B cell (primary cell): ENCODE measurements at regions of chr11 and their contacts with region 1.

Region 1: GRCh38 chr11:14519917-14520746 is at the start of gene PSMA1:
- DNase-seq: peak; percentile 94
- ATAC-seq: peak; percentile 93
- H3K4me3 ChIP-seq: peak within 1 kb of the TSS; percentile 69 to 93 (median 89)
- H3K4me3 Mint-ChIP-seq: peak within 1 kb of the TSS; percentile 98
- H3K27ac ChIP-seq: peak within 1 kb of the TSS; percentile 83 to 91
- H3K27ac Mint-ChIP-seq: peak within 1 kb of the TSS; percentile 97
- H3K4me1 ChIP-seq: peaks cover 13 to 18% of the 10 kb centered on the region in 2 donors
- H3K4me1 Mint-ChIP-seq: peaks cover 21% of the 10 kb centered on the region
- H3K27me3 ChIP-seq: no peaks in the 10 kb centered on the region
- H3K27me3 Mint-ChIP-seq: no peaks in the 10 kb centered on the region
- CTCF ChIP-seq: no peak
- total RNA-seq, gene PSMA1: 115 and 123 TPM in 2 replicates

Region 2: GRCh38 chr11:14443638-14444037 is 76.5 kb before region 1 on chr11:
- CTCF ChIA-PET with region 1: no interaction called
- POLR2A ChIA-PET with region 1: no interaction called
- intact Hi-C with region 1: no loop called
- DNase-seq: no peak
- ATAC-seq: no peak
- H3K4me3 ChIP-seq: no peak overlapping the region
- H3K4me3 Mint-ChIP-seq: no peak overlapping the region
- H3K27ac ChIP-seq: no peak overlapping the region
- H3K27ac Mint-ChIP-seq: no peak overlapping the region
- H3K4me1 ChIP-seq: peaks cover 20 to 22% of the 10 kb centered on the region in 2 donors
- H3K4me1 Mint-ChIP-seq: peaks cover 36% of the 10 kb centered on the region
- H3K27me3 ChIP-seq: no peaks in the 10 kb centered on the region
- H3K27me3 Mint-ChIP-seq: no peaks in the 10 kb centered on the region
- CTCF ChIP-seq: no peak

Region 3: DNA sequence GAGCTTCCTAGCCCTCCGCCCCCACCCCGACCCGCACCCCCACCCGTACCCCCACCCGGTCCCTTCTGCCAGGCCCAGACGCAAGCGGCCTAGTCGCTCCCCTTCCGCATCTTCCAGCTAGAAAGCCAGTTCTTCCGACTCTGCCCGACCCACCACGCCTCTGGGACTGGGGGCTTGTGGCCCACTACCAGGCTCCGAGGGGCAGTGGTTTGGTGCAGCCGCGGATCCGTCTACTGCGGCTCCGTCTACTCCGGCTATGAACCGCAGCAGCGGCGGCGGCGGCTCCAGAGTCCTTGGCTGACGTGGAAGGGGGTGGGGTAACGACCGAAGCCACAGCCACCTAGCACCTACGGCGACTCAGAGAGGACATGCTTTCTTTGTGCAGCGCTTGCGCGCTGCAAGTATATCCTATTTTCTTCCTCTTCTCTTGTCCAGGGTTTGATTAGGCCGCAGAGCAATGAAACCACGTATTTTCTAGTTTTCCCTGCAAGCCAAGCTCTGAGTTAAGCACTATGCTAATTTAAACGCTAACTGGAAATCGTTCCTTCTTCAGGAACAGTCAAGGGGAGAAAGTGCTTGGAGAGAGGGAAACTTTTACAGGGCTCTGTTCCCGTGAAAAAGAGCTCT is 20.5 kb before region 1 on chr11 and contains the start of gene COPB1:
- CTCF ChIA-PET with region 1: interaction called, 8 read pairs
- POLR2A ChIA-PET with region 1: interaction called, 5 read pairs
- intact Hi-C with region 1: loop called (anchors 1 kb)
- DNase-seq: peak; percentile 95
- ATAC-seq: peak; percentile 96
- H3K4me3 ChIP-seq: peak within 1 kb of the TSS; percentile 75 to 91 (median 86)
- H3K4me3 Mint-ChIP-seq: peak within 1 kb of the TSS; percentile 97
- H3K27ac ChIP-seq: peak within 1 kb of the TSS; percentile 76 to 85
- H3K27ac Mint-ChIP-seq: peak within 1 kb of the TSS; percentile 94
- H3K4me1 ChIP-seq: peaks cover 6 to 10% of the 10 kb centered on the region in 2 donors
- H3K4me1 Mint-ChIP-seq: peaks cover 36% of the 10 kb centered on the region
- H3K27me3 ChIP-seq: no peaks in the 10 kb centered on the region
- H3K27me3 Mint-ChIP-seq: no peaks in the 10 kb centered on the region
- CTCF ChIP-seq: no peak
- total RNA-seq, gene COPB1: 80.2 and 87.6 TPM in 2 replicates

Region 4: DNA sequence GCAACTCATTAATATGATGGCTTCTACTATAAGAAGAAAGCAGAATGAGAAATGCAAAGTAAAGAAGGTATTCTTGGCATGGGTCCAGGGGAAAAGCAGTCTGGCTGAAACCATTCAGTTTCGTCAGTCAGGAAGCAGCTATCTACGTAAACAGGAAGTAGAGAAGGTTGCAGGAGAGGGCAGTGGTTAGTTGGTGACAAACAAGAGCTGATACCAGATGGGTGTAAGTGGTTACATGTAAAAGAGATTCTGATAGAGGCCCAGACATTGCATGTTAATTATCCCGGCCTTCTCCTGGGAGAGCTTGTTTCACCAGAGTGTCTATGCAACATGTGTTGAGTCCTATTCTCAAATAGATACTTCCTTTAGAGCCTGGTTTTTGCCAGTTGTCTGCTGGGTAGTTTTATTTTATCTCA is 58.4 kb after region 1 on chr11:
- CTCF ChIA-PET with region 1: no interaction called
- POLR2A ChIA-PET with region 1: no interaction called
- intact Hi-C with region 1: loop called (anchors 5 kb)
- DNase-seq: peak; percentile 90
- ATAC-seq: peak; percentile 99
- H3K4me3 ChIP-seq: peak overlapping the region in 1 of 5 experiments; percentile 18
- H3K4me3 Mint-ChIP-seq: peak overlapping the region; percentile 51
- H3K27ac ChIP-seq: peak overlapping the region; percentile 59 to 71
- H3K27ac Mint-ChIP-seq: peak overlapping the region; percentile 85
- H3K4me1 ChIP-seq: peaks cover 13 to 22% of the 10 kb centered on the region in 2 donors
- H3K4me1 Mint-ChIP-seq: peaks cover 37% of the 10 kb centered on the region
- H3K27me3 ChIP-seq: no peaks in the 10 kb centered on the region
- H3K27me3 Mint-ChIP-seq: peaks cover 4% of the 10 kb centered on the region
- CTCF ChIP-seq: no peak

Region 5: GRCh38 chr11:14764579-14765527 is 244.7 kb after region 1 on chr11:
- CTCF ChIA-PET with region 1: no interaction called
- POLR2A ChIA-PET with region 1: no interaction called
- intact Hi-C with region 1: loop called (anchors 1 kb)
- DNase-seq: peak; percentile 81
- ATAC-seq: peak; percentile 88
- H3K4me3 ChIP-seq: peak overlapping the region in 1 of 5 experiments; percentile 0
- H3K4me3 Mint-ChIP-seq: peak overlapping the region; percentile 30
- H3K27ac ChIP-seq: peak overlapping the region; percentile 1 to 8
- H3K27ac Mint-ChIP-seq: peak overlapping the region; percentile 7
- H3K4me1 ChIP-seq: peaks cover 17 to 25% of the 10 kb centered on the region in 2 donors
- H3K4me1 Mint-ChIP-seq: peaks cover 18% of the 10 kb centered on the region
- H3K27me3 ChIP-seq: peaks cover 0 to 6% (median 5%) of the 10 kb centered on the region in 4 experiments
- H3K27me3 Mint-ChIP-seq: no peaks in the 10 kb centered on the region
- CTCF ChIP-seq: no peak